WTC11 (cell line): ENCODE measurements at regions of chr10 and their contacts with region 1.

Region 1: DNA sequence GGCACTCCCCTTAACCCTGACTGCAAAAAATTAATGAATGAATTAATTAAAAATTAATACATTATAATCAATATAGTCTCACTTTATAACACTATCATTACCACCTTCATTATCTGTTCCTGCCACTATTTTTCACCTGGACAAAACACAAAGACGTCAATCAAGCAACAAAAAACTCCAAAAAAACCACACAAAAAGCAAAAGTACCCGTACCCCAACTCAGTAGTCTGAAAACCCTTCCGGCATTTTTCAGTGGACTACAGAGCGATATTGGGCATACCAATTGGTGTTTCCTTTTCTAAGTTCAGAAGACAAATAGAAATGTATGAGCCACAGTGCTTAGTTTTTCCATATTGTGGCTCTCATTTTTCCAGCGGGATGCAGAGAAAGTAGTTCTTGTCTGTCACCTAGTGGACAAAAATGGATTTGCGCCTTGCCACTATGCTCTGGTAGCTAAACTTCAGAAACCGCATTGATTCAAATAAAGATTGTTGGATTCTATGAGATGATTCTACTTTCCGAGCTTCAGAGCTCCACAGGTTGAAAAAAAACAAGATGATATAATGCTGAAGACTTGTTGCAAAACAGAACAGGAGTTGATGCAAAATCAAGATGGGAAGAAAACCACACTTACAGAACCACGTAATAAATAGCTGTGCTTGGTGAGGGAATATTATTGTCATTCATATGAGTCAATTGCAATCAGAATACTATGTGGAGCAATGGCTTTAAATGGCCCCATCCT is 50.6 kb upstream of the ITGB1 start:
- DNase-seq: peak; percentile 52
- ATAC-seq: no peak; the same call in 1 of the 2 replicates
- H3K4me3 Mint-ChIP-seq: peak overlapping the region; percentile 33; the same call in 1 of the 2 replicates
- H3K27ac Mint-ChIP-seq: peak overlapping the region; percentile 22; the same call in 1 of the 2 replicates
- H3K4me1 Mint-ChIP-seq: peaks cover 35% of the 10 kb centered on the region
- H3K27me3 Mint-ChIP-seq: no peaks in the 10 kb centered on the region
- CTCF ChIP-seq: peak; percentile 93

Region 2: DNA sequence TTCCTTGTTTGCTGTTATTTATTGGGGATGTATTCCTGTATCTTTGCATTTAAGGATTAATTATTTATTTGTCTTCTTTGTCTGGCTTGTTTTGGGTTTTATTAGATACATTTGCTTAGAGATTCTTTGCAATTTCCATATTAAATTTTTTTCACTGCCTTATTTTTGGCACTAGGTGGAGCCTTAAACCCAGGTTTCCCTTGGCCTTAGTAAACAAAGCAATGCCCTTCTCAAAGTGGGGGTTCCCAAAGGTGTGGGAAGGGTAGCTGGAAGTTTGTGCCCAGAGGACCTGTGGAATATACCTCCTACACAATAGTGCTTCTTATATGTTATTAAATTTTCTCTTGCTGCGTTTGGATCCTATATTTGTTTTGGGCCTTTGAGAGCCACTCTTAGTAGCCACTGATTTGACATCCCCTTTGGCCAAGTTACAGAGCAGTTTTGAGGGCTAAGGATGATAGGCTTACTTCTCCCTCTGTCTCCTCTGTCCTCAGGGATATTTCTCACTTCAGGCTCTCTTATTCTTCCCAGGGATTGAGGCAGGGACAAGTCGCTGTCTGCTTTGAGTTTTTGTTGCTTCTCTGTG is 213.0 kb before region 1 on chr10:
- CTCF ChIA-PET with region 1: interaction called, 24 read pairs
- POLR2A ChIA-PET with region 1: no interaction called
- DNase-seq: no peak
- ATAC-seq: peak; percentile 72
- H3K4me3 Mint-ChIP-seq: no peak overlapping the region
- H3K27ac Mint-ChIP-seq: no peak overlapping the region
- H3K4me1 Mint-ChIP-seq: no peaks in the 10 kb centered on the region
- H3K27me3 Mint-ChIP-seq: no peaks in the 10 kb centered on the region
- CTCF ChIP-seq: peak; percentile 48

Region 3: DNA sequence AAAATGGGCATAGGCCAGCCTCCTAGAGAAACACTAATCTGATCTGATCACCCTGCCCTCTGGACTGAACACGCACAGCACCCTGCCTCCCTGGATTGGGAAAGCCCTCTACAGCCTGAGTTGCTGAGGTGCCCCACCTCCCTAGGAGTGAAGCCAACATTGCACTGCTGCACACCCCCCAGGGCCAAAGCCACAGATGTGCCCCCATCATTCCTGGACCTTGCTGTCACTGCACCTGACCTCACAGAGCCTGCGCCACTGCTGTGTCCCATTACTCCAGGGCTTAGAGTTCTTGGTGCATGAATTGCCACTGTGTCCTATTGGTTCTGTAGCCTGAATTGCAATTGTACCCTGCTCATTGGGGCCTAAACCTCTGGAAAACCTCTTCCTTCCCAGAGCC is 152.3 kb before region 1 on chr10:
- CTCF ChIA-PET with region 1: no interaction called
- POLR2A ChIA-PET with region 1: no interaction called
- DNase-seq: no peak
- ATAC-seq: no peak
- H3K4me3 Mint-ChIP-seq: no peak overlapping the region
- H3K27ac Mint-ChIP-seq: no peak overlapping the region
- H3K4me1 Mint-ChIP-seq: no peaks in the 10 kb centered on the region
- H3K27me3 Mint-ChIP-seq: peaks cover 4% of the 10 kb centered on the region; the same call in 1 of the 2 replicates
- CTCF ChIP-seq: no peak

Region 4: DNA sequence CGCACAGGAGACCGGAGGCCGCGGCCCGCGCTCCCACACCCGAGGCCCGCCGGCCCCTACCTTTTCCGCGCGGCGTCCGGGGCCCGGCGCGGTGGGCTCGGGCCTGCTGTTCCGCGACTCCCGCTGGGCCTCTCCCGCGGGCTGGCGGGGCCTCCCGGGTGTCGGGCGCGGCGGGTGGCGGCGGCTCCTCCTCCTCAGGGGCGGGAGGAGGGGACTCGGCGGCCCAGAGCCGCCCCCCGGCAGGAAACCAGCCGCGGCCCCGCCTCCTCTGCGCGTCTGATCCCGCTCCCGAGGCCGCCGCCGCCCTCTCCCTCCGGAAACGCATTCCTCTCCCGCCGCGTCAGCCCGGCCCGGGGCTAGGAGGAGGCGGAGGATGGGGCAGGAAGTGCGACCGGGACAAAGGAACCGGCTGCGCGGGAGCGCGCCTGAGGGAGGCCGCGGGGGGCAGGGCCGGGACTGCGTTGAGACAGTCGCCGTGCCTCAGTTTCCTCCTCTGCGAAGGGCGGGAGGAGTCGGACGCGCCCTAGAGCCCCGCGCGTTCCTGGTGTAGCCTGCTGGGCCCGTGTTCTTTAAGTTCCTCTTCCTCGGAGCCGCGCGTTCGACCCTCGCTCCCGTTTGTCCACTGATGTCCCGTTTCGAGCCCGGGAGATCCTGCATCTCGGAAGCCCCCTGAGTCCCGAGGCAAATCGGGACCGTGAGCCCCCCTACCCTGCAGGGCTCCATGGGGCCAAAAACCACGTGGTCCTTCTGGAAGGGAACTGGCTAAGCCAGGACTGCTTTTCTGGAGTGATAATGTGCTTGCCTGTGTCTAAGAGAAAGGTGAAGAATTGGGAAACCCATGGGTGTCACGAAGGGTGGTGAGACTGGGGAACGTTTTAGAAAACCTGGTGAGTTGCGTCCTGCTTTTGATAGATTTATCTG is 50.3 kb before region 1 on chr10 and contains the start of gene ITGB1:
- CTCF ChIA-PET with region 1: interaction called, 18 read pairs
- POLR2A ChIA-PET with region 1: interaction called, 4 read pairs
- DNase-seq: peak; percentile 98
- ATAC-seq: peak; percentile 88
- H3K4me3 Mint-ChIP-seq: peak within 1 kb of the TSS; percentile 84
- H3K27ac Mint-ChIP-seq: peak within 1 kb of the TSS; percentile 100
- H3K4me1 Mint-ChIP-seq: peaks cover 73% of the 10 kb centered on the region
- H3K27me3 Mint-ChIP-seq: no peaks in the 10 kb centered on the region
- CTCF ChIP-seq: no peak
- total RNA-seq, gene ITGB1: 317 to 344 TPM (median 321 TPM) in 3 replicates

Region 5: DNA sequence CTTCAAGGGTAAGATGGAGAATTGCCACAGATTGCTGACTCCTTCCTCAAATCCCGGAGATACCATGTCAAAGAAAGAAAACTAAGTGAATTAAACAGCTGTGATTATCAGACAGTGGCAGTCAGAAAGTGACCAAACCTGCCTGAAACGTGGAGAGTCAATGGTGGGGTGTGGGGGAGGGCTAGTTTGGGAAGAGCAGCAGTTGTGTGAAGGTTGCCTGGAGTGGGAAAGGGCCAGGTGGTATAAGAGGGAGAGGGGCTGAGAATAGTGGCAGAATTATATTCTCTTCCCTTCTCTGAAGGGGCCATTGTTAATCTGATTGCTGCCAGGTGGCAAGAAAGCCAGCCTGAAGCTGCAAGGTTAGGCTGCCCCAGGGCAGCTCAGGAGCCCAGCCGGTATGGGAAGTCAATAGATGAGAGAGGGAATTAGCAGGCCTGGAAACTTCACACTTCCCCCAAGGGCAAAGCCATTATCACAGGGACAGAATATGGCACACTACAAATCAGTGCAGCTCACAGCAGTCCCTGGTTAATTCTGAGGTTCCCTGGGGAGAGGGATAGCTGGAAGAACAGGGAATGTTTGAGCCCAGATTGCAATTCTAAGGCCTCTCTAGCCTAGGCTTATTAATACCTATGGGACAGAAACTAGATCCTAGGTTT is 33.2 kb after region 1 on chr10:
- CTCF ChIA-PET with region 1: interaction called, 13 read pairs
- POLR2A ChIA-PET with region 1: no interaction called
- DNase-seq: no peak
- ATAC-seq: peak; percentile 85
- H3K4me3 Mint-ChIP-seq: no peak overlapping the region
- H3K27ac Mint-ChIP-seq: peak overlapping the region; percentile 52
- H3K4me1 Mint-ChIP-seq: peaks cover 44% of the 10 kb centered on the region
- H3K27me3 Mint-ChIP-seq: no peaks in the 10 kb centered on the region
- CTCF ChIP-seq: no peak

Region 6: DNA sequence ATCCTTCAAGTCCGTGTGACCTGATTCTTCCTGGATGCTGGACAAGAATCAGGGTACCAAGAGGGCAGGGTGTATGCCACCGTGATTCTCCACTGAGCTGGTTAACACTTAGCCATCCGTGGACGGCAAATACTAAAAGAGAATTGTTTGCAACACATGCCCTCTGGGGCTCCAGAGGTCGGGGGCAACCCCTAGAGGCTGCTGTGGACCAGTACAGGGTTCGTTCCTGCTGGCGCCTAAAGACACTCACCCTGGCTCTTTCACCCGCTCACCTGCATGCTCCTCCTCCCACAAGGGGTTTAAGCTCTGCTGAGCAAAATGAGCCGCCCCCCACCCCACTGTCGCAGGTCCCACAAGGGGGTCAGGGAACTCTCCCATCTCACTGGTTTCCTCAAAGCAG is 98.1 kb after region 1 on chr10:
- CTCF ChIA-PET with region 1: interaction called, 20 read pairs
- POLR2A ChIA-PET with region 1: no interaction called
- DNase-seq: peak; percentile 54
- ATAC-seq: peak; percentile 96
- H3K4me3 Mint-ChIP-seq: no peak overlapping the region
- H3K27ac Mint-ChIP-seq: no peak overlapping the region
- H3K4me1 Mint-ChIP-seq: peaks cover 54% of the 10 kb centered on the region
- H3K27me3 Mint-ChIP-seq: peaks cover 12% of the 10 kb centered on the region
- CTCF ChIP-seq: no peak